ENCODE measurements at regions of chr11 and their contacts with region 1.

Region 1: DNA sequence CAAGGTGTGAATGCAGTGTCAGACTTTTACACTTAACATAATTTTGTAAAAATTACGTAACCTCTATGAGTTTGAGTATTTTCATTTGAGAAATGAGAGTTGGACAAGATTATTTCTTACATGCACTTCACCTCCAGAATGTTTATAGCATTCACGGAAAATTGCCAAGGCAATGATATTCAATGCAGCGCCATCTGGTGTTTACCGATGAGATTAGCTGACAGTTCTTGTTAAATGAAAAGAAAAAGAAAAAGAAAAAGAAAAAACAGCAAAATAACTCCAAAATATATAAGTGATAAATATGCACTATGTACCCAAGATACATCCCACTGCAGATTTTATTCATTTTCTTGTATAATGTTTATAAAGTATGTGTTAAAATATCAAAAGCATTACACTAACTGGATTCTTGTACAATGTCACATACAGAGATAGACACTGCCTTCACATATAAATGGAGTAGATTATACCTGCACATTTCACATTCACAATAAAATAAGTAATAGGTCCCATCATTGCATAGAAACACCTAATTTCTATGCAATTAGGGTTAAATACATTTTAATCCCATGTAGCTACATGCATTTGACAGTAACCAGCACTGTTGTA is 976.3 kb upstream of the FAT3 start:
- DNase-seq: no peak
- ATAC-seq: no peak

Region 2: DNA sequence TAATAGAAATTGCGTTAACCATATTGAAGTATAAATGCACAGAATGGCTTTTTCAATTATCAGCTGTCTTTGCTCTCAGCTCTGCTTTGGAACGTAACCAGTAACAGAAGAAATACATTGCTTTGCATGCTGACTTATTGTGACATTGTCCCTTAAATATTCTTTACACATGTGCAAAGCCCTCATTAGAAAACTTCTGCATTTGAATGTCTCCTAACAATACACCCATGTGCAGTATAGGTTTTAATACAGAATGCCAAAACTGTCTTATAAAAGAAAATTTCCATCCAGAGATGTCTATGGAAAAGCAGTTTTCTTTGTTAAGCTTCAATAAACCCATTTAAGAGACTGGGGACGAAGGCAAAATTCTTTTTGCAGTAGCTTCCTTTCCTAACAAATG is 465.2 kb before region 1 on chr11:
- intact Hi-C with region 1: no loop called
- DNase-seq: no peak
- ATAC-seq: no peak

Region 3: DNA sequence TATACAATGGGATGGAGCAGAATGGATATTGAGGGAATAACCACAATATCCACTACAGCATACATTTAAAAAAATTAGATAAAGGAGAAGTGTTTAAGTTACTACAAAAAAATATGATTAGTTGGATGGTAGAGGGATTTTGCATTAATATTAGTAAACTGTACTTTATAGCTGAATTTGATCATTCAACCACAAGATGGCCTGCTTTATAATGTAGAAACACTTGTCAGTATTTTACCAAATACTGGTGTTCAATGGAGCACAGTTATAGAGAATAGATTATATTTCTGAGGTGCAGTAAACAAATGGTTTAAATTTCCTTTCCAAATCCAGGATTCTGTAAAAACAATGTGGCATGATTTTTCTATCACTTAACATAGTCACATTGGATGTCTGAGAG is 206.7 kb before region 1 on chr11:
- intact Hi-C with region 1: loop called in 1 of 2 experiments (anchors 10 kb)
- DNase-seq: no peak
- ATAC-seq: no peak

Region 4: DNA sequence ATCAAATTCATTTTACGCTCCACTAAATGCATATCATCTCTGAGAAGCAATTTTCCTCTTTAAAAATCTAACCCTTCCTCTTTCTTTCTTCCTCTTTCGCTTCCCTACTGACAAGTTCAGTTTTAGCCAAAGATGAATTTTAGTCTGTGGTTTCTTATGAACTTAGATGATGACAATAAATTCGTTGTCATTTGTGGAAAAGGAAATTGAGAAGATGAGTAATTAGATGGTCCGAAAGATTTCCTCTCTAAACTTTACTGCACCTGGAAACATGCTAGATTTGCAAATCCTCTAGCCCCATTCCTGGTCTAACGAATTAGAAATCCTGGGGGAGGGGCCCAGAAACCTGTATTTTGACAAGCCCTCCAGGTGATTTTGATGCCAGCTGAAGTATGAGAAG is 170.1 kb before region 1 on chr11:
- intact Hi-C with region 1: loop called in 1 of 2 experiments (anchors 10 kb)
- DNase-seq: no peak
- ATAC-seq: no peak

Region 5: DNA sequence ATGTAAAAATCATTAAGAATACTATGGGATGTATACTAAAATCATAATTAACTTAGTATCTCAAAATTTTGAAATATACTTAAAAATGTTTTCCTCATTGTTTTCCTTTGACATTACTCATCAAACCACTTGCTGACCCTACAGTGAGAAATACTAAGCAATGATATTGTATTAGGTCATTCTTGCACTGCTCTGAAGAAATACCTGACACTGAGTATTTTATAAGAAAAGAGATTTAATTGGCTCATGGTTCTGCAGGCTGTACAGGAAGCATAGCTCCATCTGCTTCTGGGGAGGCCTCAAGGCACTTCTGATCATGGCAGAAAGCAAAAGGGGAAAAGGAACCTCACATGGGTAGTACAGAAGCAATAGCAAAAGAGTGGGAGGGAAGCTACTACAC is 74.6 kb before region 1 on chr11:
- intact Hi-C with region 1: no loop called
- DNase-seq: no peak
- ATAC-seq: no peak